ENCODE measurements at regions of chr12 and their contacts with region 1.

Region 1: DNA sequence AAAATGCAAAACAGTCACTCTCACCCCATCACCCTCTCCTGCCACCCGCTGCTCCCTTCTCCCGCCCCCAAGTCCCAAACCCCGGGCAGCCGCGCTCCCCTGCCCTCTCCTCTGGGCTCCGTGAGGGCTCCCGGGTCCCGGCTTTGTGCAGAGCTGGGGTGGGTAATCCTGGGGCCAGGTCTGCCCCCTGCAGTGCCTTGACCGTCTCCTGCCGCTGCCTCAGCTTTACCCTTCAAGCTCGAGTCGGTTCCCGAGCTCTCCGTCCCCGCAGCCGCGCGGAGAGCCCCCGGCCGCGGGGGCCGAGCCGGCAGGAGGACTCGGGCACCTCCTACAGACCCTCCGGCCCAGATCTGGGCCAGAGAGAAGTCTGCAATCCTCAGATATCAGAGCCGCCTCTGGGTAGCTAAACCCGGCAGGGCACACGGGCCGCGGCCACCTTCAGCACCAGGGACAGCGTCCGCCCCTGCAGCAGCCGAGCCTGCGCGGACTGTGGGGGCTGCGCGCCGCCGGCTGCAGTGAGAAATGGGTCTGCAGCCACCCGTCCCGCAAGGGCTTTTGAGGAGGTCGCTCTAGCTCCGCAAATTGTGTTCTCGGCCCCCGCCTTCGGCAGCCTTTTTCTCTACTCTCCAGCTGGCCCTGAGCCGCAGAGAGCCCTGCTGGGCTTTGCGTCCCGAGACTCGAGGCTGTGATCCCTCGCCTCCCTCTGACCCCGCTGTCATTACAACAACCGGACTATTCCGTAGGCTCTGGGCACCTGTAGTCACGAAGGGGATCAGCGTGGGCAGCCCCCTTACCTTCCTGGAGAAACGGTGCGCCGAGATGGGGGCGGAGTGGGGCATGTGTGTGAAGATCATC is 1.2 kb downstream of the PRMT8 start:
- DNase-seq: peak in 7 of 10 donors; percentile 14 to 71 (median 46)
- H3K4me3 ChIP-seq: peak overlapping the region; percentile 27 to 72 (median 57)
- H3K27ac ChIP-seq: peak overlapping the region in 56 of 59 donors; percentile 48 to 94 (median 83)
- H3K27me3 ChIP-seq: peaks cover 0 to 71% (median 26%) of the 10 kb centered on the region in 45 donors
- CTCF ChIP-seq: peak in 1 of 56 donors; percentile 14

Region 2: DNA sequence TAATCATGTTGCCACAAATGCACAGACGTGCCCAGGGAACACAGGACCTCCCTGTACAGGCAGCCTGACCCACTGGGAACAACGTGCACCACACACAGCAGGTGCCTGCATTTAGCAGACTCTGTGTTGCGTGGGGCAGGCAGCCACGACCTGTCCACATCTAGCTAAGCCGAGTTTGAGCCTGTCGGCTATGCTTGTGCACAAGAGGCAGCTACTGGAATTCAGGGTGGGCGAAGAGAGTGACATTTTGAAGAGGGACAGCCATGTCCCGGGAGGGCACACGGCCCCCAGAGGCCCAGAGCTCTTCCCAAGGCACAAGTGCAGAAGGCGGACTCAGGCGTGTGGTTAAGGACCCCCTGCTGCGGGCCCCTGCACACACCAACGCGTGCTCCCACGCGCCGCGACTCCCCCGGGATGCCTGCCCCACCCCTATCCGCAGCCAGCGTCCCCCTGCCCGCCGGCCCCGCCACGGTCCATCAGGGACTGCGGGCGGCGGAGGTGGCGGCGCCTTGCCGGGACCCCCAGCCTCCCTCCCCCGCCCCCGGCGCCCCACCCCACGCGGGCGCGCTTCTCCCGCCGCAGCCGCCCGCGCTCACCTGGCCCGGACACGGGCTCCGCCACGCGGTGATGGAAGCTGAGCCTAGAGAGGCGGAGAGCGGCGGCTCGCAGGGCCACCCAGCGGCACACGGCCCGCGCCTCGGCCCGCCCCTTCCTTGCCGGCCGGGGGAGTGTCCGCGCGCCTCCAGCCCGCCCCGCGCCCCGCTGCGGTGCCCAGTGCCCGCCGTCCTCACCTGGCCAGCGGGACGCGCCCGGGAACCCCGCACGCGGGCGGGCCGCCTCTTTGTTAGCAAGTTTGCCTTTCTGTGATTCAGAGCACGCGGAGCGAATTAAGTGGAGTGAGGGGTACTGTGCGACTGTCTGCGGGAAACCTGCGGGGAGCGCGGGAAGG is 126.4 kb before region 1 on chr12:
- intact Hi-C with region 1: loop called in 1 of 2 experiments (anchors 10 kb)
- DNase-seq: peak in 3 of 10 donors; percentile 24 to 70 (median 49)
- H3K4me3 ChIP-seq: peak overlapping the region; percentile 31 to 73 (median 59)
- H3K27ac ChIP-seq: peak overlapping the region in 19 of 59 donors; percentile 9 to 75 (median 45)
- H3K27me3 ChIP-seq: peaks cover 0 to 16% (median 0%) of the 10 kb centered on the region in 45 donors
- CTCF ChIP-seq: peak in 20 of 56 donors; percentile 5 to 54 (median 24)

Region 3: GRCh38 chr12:3622021-3622821 is 130.1 kb after region 1 on chr12:
- intact Hi-C with region 1: loop called (anchors 10 kb)
- DNase-seq: no peak
- H3K4me3 ChIP-seq: no peak overlapping the region
- H3K27ac ChIP-seq: peak overlapping the region in 56 of 59 donors; percentile 7 to 90 (median 72)
- H3K27me3 ChIP-seq: no peaks in the 10 kb centered on the region
- CTCF ChIP-seq: no peak